ENCODE measurements at regions of chr14 and their contacts with region 1.

Region 1: GRCh38 chr14:49620182-49621113 is at the starts of genes MGAT2 and RPL36AL:
- DNase-seq: peak; percentile 96
- H3K27ac ChIP-seq: peak within 1 kb of the TSS; percentile 94
- CTCF ChIP-seq: peak; percentile 30

Region 2: DNA sequence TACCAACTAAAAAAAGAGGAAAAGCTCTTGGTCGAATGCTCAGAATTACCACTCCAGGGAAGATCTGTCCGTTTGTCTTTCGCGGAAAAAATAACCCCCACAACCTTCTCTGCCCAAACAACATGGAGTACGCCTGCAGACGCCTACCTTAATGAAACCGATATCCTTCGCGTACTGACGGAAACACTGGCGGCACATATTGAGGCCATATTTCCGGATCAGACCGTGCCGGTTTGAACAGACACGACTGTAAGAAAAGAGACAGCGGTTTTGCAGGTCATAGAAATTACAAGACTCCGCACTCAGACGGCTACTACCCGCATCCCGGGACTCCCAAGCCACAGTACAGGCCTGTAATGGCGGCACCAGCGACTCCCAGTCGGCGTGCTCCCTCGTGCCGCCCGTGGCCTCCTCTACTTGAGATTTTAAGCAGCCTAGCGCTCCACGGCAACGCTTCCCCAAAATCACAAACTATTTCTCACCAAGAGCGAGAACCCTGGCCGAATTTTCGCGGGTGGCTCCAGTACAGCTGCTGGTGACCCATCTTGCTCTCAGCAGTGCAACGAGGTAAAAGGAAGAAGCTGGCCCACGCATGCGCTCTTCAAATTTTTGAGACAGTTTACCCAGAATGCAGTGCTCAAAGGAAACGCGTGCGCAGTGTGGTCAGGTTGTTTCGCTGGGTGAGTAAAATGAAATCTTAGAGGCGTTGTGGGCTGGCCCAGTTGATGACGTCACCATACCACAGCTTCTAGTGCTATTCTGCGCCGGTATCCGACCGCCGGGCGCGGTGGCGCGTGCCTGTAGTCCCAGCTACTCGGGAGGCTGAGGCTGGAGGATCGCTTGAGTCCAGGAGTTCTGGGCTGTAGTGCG is 34.4 kb before region 1 on chr14 and contains the start of gene RPS29:
- CTCF ChIA-PET with region 1: interaction called, 3 read pairs
- POLR2A ChIA-PET with region 1: interaction called, 10 read pairs
- DNase-seq: peak; percentile 96
- H3K27ac ChIP-seq: peak within 1 kb of the TSS; percentile 91
- CTCF ChIP-seq: no peak

Region 3: DNA sequence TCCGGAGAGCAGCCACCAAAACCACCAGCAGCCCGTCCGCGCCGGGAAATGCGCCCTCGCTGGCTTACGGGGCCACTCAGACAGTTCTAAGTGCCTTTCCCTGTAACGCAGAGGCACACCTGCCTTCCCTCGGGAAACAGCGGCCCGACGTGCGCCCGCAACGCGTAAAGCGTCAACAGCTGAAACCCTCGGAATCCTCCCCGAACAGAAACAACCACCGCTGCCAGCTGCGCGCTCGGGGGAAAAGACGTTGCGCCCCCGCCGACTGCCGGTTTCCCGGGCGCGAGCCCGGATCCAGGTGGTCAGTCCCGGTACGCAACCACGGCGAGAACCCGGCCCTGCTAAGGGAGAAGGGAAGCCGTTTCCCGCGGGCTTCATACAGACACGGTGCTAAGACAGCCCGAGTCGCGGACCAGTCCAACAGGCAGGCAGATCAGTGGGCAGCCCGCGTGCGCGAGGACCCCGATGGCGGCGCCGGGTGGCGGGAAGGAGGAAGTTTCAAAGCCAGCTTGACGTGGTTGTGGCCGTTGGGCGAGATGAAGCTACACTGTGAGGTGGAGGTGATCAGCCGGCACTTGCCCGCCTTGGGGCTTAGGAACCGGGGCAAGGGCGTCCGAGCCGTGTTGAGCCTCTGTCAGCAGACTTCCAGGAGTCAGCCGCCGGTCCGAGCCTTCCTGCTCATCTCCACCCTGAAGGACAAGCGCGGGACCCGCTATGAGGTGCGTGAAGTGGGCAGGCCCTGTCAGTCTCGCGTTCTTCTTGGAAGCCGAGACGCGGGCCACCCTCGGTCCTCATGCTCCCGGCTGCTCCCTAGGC is 21.8 kb before region 1 on chr14 and contains the start of gene LRR1:
- CTCF ChIA-PET with region 1: no interaction called
- POLR2A ChIA-PET with region 1: interaction called, 10 read pairs
- DNase-seq: peak; percentile 67
- H3K27ac ChIP-seq: peak within 1 kb of the TSS; percentile 96
- CTCF ChIP-seq: no peak

Measured in RWPE1 (cell line).